H1 (cell line): ENCODE measurements at regions of chr9 and their contacts with region 1.

Region 1: DNA sequence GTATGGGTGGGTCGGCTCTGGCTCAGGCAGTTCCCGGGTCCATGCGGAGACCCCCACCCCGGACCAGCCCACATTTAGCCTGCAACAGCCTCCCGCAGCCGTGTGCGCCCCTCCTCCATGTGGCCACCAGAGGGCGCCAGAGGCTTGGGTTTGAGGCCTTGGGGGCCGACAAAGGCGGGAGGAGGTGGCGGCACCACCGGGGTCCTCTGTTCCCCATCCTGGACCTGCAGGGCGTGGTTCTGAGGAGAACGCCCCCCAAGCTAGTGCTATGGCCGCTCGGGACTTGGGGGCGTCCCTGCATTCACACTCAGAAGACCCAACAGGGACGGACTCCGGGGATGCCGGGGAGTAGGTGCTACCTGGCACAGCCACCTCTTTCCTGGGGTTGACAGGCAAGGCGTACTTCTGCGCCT is 16.5 kb downstream of the ASS1 start:
- DNase-seq: peak in 1 of 2 experiments; percentile 96
- H3K4me3 ChIP-seq: no peak overlapping the region
- H3K27ac ChIP-seq: no peak overlapping the region
- H3K4me1 ChIP-seq: no peaks in the 10 kb centered on the region; a peak in 2 of 7 replicates
- H3K27me3 ChIP-seq: no peaks in the 10 kb centered on the region
- CTCF ChIP-seq: peak in 2 of 3 experiments; percentile 88 to 96; a peak in 3 of 4 replicates
- EP300 ChIP-seq: no peak
- POLR2A ChIP-seq: no peak
- RAD21 ChIP-seq: peak; percentile 95 to 98

Region 2: DNA sequence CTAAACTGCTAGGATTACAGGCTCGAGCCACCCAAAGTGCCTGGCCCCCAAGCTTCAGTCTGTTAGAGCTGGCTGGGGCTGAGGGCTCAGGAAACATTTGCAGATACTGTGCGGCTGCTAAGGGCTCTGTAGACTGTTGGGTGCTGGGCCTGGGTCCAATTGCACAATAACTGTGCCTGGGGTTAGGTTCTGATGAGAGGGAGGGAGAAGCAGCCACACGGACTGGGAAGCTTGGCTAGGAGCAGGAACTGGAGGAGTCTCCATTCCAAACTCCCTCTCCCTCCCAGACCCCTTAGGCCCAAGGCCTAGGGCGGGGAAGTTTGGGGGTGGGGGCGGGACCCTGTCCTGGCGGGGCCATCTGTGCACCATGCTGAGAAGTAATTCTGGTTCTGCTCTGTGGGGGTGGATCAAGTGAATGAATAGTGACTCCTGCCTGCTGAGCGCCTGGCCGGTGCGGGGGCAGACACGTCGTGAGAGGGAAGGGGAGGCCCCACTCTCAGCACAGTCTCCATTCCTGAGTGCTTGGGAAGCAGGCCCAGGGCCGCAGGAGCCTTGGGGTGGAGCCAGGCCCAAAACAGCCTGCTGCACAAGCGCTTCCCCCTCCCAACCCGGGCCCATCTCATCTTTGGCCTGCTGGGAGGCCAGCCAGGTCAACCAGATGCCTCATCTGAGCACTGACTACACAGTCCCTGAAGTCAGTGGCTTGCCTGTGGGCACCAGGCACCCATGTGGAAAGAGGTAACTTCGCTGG is 14.9 kb before region 1 on chr9:
- CTCF ChIA-PET with region 1: interaction called, 46 read pairs
- POLR2A ChIA-PET with region 1: interaction called, 10 read pairs
- DNase-seq: peak in 1 of 2 experiments; percentile 67
- H3K4me3 ChIP-seq: peak overlapping the region in 3 of 4 experiments; percentile 64 to 77 (median 66); a peak in 6 of 8 replicates
- H3K27ac ChIP-seq: no peak overlapping the region
- H3K4me1 ChIP-seq: peaks cover 8 to 39% (median 35%) of the 10 kb centered on the region in 4 experiments
- H3K27me3 ChIP-seq: peaks cover 0 to 11% (median 7%) of the 10 kb centered on the region in 4 experiments; a peak in 3 of 7 replicates
- CTCF ChIP-seq: no peak
- EP300 ChIP-seq: no peak
- POLR2A ChIP-seq: no peak
- RAD21 ChIP-seq: no peak

Region 3: GRCh38 chr9:130480331-130481072 is 19.3 kb after region 1 on chr9:
- CTCF ChIA-PET with region 1: interaction called, 136 read pairs
- POLR2A ChIA-PET with region 1: interaction called, 3 read pairs
- DNase-seq: peak; percentile 19 to 83
- H3K4me3 ChIP-seq: no peak overlapping the region
- H3K27ac ChIP-seq: no peak overlapping the region
- H3K4me1 ChIP-seq: peaks cover 0 to 2% (median 0%) of the 10 kb centered on the region in 4 experiments; a peak in 2 of 7 replicates
- H3K27me3 ChIP-seq: no peaks in the 10 kb centered on the region
- CTCF ChIP-seq: peak in 2 of 3 experiments; percentile 82 to 88; a peak in 3 of 4 replicates
- EP300 ChIP-seq: no peak
- POLR2A ChIP-seq: no peak
- RAD21 ChIP-seq: peak; percentile 81 to 85

Region 4: DNA sequence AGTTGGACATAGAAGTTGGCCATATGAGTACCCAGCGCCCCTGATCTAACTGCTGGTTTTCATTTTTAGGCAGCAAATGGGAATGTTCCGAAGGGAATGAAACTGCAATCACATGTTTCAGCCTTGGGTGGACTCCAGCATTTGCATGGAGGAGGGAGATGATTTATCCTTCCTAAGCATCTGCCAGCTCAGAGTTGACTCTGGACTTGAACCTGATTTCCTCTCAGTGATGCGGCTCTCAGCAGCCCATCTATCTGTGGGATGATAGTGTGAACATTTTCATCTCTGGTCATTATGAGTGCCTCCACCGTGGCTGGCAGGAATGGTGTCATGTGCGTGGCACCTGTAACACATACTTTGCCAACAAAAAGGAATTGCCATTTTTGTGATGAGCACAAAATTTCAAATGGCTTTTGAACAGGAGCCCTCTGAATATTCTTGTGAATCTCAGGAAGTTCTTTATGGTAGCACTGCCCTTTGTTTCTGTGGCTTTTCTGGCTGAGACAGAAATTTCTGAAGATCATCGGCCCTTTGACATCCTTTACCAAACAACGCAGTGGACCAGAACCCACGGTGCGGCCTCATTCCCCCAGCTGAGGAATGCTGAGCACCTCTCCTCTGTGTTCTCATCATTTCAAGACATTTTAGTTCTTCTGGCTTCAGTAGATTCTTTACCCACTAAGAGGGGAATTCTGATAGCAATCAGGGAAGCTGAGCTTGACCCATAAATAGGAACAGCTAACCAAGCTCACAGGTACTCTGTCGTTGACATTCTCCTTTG is 146.6 kb after region 1 on chr9:
- CTCF ChIA-PET with region 1: interaction called, 10 read pairs
- POLR2A ChIA-PET with region 1: no interaction called
- DNase-seq: no peak
- H3K4me3 ChIP-seq: no peak overlapping the region
- H3K27ac ChIP-seq: no peak overlapping the region
- H3K4me1 ChIP-seq: no peaks in the 10 kb centered on the region; a peak in 1 of 7 replicates
- H3K27me3 ChIP-seq: no peaks in the 10 kb centered on the region
- CTCF ChIP-seq: no peak
- EP300 ChIP-seq: no peak
- POLR2A ChIP-seq: no peak
- RAD21 ChIP-seq: no peak

Region 5: GRCh38 chr9:130626249-130626992 is 165.2 kb after region 1 on chr9:
- CTCF ChIA-PET with region 1: interaction called, 30 read pairs
- POLR2A ChIA-PET with region 1: no interaction called
- DNase-seq: no peak
- H3K4me3 ChIP-seq: no peak overlapping the region
- H3K27ac ChIP-seq: no peak overlapping the region; the same call in 1 of the 2 replicates
- H3K4me1 ChIP-seq: peaks cover 12 to 27% (median 18%) of the 10 kb centered on the region in 4 experiments
- H3K27me3 ChIP-seq: no peaks in the 10 kb centered on the region
- CTCF ChIP-seq: peak in 2 of 3 experiments; percentile 17 to 43; a peak in 2 of 4 replicates
- EP300 ChIP-seq: no peak
- POLR2A ChIP-seq: no peak
- RAD21 ChIP-seq: peak; percentile 45 to 51

Region 6: DNA sequence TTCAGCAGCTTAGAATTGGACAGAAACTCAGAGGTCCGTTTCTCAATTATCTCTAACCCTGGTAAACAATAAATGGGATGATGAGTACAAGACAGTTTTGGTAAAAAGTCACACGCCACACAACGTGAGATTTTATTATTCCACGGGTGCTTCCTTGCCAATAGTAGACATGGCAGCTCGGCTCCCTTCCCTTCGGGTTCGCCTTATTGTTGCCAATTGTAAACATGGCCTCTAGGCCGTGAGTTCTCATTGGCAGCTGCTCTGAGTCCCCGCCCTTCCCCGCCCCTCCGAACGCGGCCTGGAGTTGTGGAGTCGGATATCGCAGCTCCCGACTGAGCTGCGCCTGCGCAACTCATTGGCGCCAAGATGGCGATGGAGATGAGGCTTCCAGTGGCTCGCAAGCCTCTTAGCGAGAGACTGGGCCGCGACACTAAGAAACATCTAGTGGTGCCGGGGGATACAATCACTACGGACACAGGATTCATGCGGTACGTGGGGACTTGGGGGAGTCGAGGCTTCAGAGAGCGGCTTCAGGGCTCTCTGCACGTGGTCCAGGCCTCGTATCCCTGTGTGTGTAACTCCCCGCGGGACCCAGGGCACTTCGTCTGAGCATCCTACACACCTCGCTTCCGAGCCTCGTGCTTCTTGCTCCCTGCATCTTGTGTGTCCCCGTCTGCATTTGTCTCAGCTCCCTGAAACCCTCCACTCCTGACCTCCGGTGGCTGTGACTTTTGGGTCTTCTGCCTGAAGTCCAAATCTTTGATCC is 232.4 kb after region 1 on chr9 and contains the start of gene EXOSC2:
- CTCF ChIA-PET with region 1: interaction called, 36 read pairs
- POLR2A ChIA-PET with region 1: interaction called, 5 read pairs
- DNase-seq: peak; percentile 86 to 90
- H3K4me3 ChIP-seq: peak within 1 kb of the TSS; percentile 94 to 100 (median 98)
- H3K27ac ChIP-seq: peak within 1 kb of the TSS; percentile 89
- H3K4me1 ChIP-seq: peaks cover 4 to 9% (median 6%) of the 10 kb centered on the region in 4 experiments; a peak in 6 of 7 replicates
- H3K27me3 ChIP-seq: no peaks in the 10 kb centered on the region
- CTCF ChIP-seq: no peak
- EP300 ChIP-seq: no peak
- POLR2A ChIP-seq: peak; percentile 90 to 92
- RAD21 ChIP-seq: no peak
- total RNA-seq, gene EXOSC2: 84.3 and 93.6 TPM in 2 replicates

Region 7: GRCh38 chr9:130701056-130702022 is 240.1 kb after region 1 on chr9:
- CTCF ChIA-PET with region 1: interaction called, 14 read pairs
- POLR2A ChIA-PET with region 1: no interaction called
- DNase-seq: peak in 1 of 2 experiments; percentile 93
- H3K4me3 ChIP-seq: no peak overlapping the region
- H3K27ac ChIP-seq: 0 out of 2 replicates have a peak overlapping the region, but pooled peaks have one; percentile 2
- H3K4me1 ChIP-seq: no peaks in the 10 kb centered on the region; a peak in 1 of 7 replicates
- H3K27me3 ChIP-seq: no peaks in the 10 kb centered on the region
- CTCF ChIP-seq: peak; percentile 87 to 98 (median 97)
- EP300 ChIP-seq: no peak
- POLR2A ChIP-seq: no peak
- RAD21 ChIP-seq: peak; percentile 75 to 79